K562 (cell line): ENCODE measurements at regions of chr13 and their contacts with region 1.

Region 1: GRCh38 chr13:45340926-45341750 is at the start of gene TPT1:
- DNase-seq: peak; percentile 94 to 97 (median 96)
- ATAC-seq: peak; percentile 96
- H3K4me3 ChIP-seq: peak within 1 kb of the TSS; percentile 96
- H3K27ac ChIP-seq: peak within 1 kb of the TSS; percentile 99
- H3K4me1 ChIP-seq: peaks cover 5 to 8% of the 10 kb centered on the region in 2 experiments; a peak in 4 of 5 replicates
- H3K27me3 ChIP-seq: no peaks in the 10 kb centered on the region
- CTCF ChIP-seq: no peak
- EP300 ChIP-seq: no peak; the same call in 1 of the 2 replicates
- POLR2A ChIP-seq: peak; percentile 90
- RAD21 ChIP-seq: no peak
- polyA plus RNA-seq, gene TPT1: 602 to 615 TPM

Region 2: DNA sequence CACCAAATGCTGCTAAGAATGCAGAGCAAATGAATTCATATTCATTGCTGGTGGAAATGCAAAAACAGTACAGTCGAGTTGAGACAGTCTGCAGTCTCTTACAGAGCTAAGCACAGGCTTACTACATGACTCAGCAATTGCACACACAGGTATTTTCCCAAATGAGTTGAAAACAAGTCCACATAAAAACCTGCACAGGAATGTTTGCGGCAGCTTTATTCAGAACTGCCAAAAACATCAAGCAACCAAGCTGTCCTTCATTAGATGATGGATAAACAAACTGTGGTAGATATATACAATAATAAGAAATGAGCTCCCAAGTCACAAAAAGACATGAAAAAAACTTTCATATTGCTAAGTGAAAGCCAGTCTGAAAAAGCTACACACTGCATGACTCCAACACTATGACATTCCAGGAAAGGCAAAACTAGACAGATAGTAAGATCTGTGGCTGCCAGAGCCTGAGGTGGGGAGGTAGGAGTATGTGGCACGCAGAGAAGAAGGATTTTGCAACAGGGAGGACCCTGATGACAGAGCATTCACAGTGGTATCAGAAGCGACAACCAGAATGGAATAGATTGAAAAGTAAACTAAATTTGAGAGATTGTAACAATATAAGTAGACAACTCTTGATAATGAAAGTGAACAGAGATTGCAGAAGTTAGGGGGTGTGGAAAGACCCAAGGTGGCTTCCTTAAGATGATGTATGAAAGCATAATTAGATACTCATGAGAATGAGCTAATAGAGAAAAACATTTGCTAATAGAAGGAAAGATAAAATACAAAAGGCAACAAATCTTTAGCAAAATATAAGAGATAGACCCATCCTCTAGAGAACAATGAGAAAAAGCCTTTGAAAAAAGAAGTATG is 817.8 kb before region 1 on chr13:
- CTCF ChIA-PET with region 1: no interaction called
- POLR2A ChIA-PET with region 1: no interaction called
- in situ Hi-C with region 1: no loop called
- intact Hi-C with region 1: no loop called
- DNase-seq: peak in 2 of 4 experiments; percentile 5 to 21
- ATAC-seq: peak; percentile 61; the same call in 2 of the 3 replicates
- H3K4me3 ChIP-seq: no peak overlapping the region
- H3K27ac ChIP-seq: no peak overlapping the region
- H3K4me1 ChIP-seq: 0 out of 5 replicates have a peak, but pooled peaks cover 0 to 6% of the 10 kb centered on the region in 2 experiments
- H3K27me3 ChIP-seq: no peaks in the 10 kb centered on the region
- CTCF ChIP-seq: no peak
- EP300 ChIP-seq: no peak
- POLR2A ChIP-seq: no peak
- RAD21 ChIP-seq: no peak

Region 3: DNA sequence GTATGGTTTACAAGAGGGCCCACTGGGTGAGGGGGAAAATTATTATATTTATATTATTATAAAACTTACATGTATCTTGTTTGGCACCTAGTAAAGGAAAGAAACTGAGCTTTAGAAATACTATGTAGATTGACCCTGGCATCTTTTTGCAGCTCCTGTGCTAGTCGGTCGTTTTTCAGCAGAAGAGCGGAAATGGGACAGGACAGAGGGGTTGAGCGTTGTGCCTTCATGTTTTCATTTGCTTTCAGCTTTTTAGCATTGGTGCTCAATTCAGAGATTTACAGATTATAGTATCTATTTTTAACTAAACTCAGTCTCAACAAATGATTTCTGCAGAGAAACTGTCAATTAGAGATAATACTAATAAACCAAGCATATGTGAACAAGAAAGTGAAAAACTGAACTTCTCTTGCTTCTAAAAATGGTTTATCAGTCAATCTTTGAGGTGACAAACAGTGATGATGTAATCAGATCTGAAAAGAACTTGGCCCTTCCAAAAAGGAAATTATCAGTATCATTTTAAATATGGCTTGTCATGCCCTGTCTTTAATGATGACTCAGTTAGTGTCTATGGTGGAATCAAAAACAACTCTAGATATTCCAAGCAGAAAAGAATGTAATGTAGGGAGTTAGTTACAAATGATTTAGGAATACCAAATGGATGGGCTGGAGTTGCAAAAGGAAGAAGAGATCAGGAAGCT is 83.3 kb before region 1 on chr13:
- CTCF ChIA-PET with region 1: no interaction called
- POLR2A ChIA-PET with region 1: no interaction called
- in situ Hi-C with region 1: no loop called
- intact Hi-C with region 1: no loop called
- DNase-seq: no peak
- ATAC-seq: no peak
- H3K4me3 ChIP-seq: no peak overlapping the region
- H3K27ac ChIP-seq: no peak overlapping the region
- H3K4me1 ChIP-seq: no peaks in the 10 kb centered on the region
- H3K27me3 ChIP-seq: no peaks in the 10 kb centered on the region
- CTCF ChIP-seq: no peak
- EP300 ChIP-seq: no peak
- POLR2A ChIP-seq: no peak
- RAD21 ChIP-seq: no peak

Region 4: DNA sequence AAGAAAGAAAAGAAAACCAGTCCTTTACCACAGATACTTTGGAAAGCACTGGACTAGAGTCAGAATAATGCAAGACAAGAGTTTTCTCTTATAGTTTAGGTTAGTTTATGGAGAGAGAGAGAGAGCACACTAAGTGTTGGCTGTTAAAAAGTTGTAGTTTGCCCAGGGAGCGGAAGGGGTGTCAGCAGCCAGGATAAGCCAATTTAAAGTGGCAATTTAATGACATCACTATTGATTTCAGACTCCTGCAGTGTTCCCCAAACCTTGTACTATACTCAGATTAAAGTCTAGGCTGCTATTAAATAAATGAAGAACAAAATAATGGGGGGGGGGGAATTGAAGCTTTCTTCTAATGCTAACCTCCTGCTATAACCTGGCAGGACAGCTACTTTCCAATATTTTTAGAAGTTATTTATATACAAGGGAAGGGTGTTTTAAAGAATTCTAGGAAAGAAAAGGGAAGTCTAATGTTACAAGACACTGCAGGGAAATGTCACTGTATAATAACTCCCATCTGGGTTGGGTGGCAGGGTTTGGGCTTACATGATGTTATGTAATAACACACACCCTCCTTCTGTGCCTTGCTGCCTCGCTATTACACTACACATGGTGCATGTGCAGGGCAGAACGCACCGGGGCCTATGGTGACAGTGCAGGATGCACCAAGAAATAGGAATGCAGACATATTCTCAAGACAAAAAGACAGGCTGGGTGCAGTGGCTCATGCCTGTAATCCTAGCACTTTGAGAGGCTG is 20.1 kb before region 1 on chr13:
- CTCF ChIA-PET with region 1: no interaction called
- POLR2A ChIA-PET with region 1: interaction called, 20 read pairs
- in situ Hi-C with region 1: no loop called
- intact Hi-C with region 1: no loop called
- DNase-seq: no peak
- ATAC-seq: peak; percentile 13; the same call in 1 of the 3 replicates
- H3K4me3 ChIP-seq: no peak overlapping the region
- H3K27ac ChIP-seq: no peak overlapping the region
- H3K4me1 ChIP-seq: peaks cover 6 to 13% of the 10 kb centered on the region in 2 experiments; a peak in 3 of 5 replicates
- H3K27me3 ChIP-seq: no peaks in the 10 kb centered on the region
- CTCF ChIP-seq: no peak
- EP300 ChIP-seq: no peak
- POLR2A ChIP-seq: no peak
- RAD21 ChIP-seq: no peak

Region 5: DNA sequence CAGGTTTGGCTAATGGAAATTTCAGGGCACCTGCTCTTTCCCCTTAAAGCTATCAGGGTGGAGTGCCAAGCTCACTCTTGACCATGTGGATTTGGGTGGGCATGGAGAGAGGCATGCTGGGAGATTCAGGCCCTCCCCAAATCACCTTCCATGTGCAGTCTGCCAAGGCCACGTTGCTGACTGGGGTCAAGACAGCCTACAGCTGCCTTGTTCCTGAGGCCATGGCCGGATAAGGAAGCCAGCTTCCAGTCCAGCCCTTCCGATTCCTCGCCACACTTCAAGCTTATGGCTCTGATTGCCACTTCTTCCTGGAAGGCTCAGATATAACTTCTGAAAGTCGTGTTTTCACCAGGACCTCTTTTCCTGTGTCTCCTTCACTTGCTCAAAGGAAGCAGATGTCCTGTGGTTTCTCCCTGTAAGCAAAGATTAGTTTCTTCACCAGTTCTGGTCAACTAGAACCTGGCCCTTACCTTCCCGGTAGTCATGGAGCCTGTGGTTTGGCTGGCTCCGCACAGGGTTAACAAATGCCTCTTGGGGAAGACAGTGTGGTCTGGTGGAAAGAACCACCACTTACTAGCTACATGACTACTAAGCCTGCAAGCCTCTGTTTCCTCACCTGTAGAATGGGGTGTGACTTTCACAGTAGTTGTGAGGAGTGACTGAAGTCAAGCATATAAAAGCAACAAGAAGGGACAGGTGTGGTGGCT is 16.0 kb after region 1 on chr13:
- CTCF ChIA-PET with region 1: no interaction called
- POLR2A ChIA-PET with region 1: interaction called, 15 read pairs
- in situ Hi-C with region 1: no loop called
- intact Hi-C with region 1: no loop called
- DNase-seq: no peak
- ATAC-seq: no peak
- H3K4me3 ChIP-seq: no peak overlapping the region
- H3K27ac ChIP-seq: no peak overlapping the region
- H3K4me1 ChIP-seq: peaks cover 0 to 5% of the 10 kb centered on the region in 2 experiments; a peak in 3 of 5 replicates
- H3K27me3 ChIP-seq: no peaks in the 10 kb centered on the region
- CTCF ChIP-seq: no peak
- EP300 ChIP-seq: no peak
- POLR2A ChIP-seq: no peak
- RAD21 ChIP-seq: no peak

Region 6: DNA sequence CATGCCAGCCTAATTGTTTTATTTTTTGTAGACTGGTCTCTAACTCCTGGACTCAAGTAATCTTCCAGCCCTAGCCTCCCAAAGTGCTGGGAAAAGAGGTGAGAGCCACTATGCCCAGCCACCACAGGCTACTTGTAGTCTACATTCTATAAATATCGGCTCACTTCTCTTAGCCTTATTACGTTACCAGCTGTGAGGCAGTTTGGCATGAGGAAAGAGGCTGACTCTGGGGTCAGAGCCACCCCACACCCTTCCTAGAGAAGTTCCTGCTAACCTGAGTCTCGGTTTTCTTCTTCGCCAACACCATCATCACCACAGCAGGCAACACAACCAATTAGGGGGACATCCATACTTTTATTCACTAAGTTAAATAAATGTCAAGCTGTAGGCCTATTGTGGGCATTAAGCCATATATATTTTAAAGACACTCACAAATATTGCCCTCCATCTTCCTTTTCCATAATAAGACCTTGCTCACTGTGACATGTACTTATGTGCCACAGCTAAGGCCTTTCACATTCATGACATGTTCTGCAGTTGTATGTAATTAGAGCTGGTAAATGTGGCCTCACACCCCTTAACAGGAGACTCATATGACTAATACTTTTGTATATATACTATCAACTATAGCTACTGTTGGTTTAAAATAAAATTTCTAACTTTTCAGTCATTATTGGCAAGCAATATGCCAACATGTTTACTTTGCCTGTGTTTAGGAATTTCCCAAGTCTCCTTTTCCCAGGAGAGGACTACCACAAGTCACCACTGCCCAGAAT is 71.3 kb after region 1 on chr13:
- CTCF ChIA-PET with region 1: no interaction called
- POLR2A ChIA-PET with region 1: no interaction called
- in situ Hi-C with region 1: no loop called
- intact Hi-C with region 1: no loop called
- DNase-seq: no peak
- ATAC-seq: no peak
- H3K4me3 ChIP-seq: no peak overlapping the region
- H3K27ac ChIP-seq: no peak overlapping the region
- H3K4me1 ChIP-seq: peaks cover 7 to 17% of the 10 kb centered on the region in 2 experiments; a peak in 3 of 5 replicates
- H3K27me3 ChIP-seq: no peaks in the 10 kb centered on the region
- CTCF ChIP-seq: no peak
- EP300 ChIP-seq: no peak
- POLR2A ChIP-seq: no peak
- RAD21 ChIP-seq: no peak

Region 7: GRCh38 chr13:45490068-45490467 is 148.9 kb after region 1 on chr13:
- CTCF ChIA-PET with region 1: no interaction called
- POLR2A ChIA-PET with region 1: no interaction called
- in situ Hi-C with region 1: no loop called
- intact Hi-C with region 1: no loop called
- DNase-seq: peak in 2 of 4 experiments; percentile 7 to 18
- ATAC-seq: peak; percentile 74
- H3K4me3 ChIP-seq: no peak overlapping the region
- H3K27ac ChIP-seq: no peak overlapping the region
- H3K4me1 ChIP-seq: no peaks in the 10 kb centered on the region
- H3K27me3 ChIP-seq: no peaks in the 10 kb centered on the region
- CTCF ChIP-seq: peak; percentile 35 to 44 (median 37); a peak in 3 of 6 replicates
- EP300 ChIP-seq: no peak
- POLR2A ChIP-seq: no peak
- RAD21 ChIP-seq: no peak